Activated CD8-positive, alpha-beta T cell treated with anti-CD3 and anti-CD28 coated beads for 36 hours (primary cell): ENCODE measurements at regions of chr7 and their contacts with region 1.

Region 1: DNA sequence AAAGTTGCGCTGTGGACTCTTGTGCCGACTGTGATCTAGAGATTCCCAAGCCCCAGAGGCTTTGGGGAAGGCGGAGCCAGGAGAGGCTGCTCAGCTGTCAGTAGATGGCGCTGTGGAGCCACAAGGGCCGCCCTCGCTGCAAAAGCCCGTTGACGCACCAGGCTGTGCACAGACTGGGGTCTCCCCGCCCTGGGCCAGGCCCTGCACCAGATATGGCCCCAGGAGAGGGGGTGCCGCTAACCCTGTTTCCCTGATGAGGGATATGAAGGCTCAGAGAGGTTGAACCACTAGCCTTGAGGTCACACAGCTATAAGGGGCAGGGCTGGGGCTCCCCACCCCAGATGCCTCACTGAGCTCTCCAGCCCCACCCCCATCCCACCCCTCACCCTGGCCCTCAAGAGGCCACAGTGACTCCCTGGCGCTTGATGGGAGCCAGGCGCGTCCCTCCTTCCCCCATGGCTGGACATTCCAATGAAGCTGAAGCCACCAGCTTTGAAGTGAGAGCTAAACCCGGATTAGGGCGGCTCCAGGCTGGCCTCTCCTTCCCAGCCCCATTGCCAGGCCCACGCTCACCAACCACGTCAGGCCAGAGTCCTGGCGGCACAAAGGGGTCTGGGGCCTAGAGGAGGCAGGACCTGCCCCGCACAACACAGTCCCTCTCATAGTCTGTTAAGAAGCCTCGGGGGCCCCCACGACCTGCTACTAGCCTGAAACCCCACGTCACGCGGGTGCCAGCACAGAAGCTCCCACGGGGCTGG is 26.4 kb downstream of the MYL10 start:
- DNase-seq: peak; percentile 79
- ATAC-seq: peak; percentile 96
- H3K4me3 Mint-ChIP-seq: no peak overlapping the region
- H3K27ac Mint-ChIP-seq: no peak overlapping the region
- H3K4me1 Mint-ChIP-seq: no peaks in the 10 kb centered on the region
- H3K27me3 Mint-ChIP-seq: no peaks in the 10 kb centered on the region
- CTCF ChIP-seq: peak; percentile 87

Region 2: GRCh38 chr7:101531726-101532357 is 70.8 kb before region 1 on chr7:
- CTCF ChIA-PET with region 1: no interaction called
- POLR2A ChIA-PET with region 1: no interaction called
- intact Hi-C with region 1: no loop called
- DNase-seq: no peak
- ATAC-seq: no peak
- H3K4me3 Mint-ChIP-seq: no peak overlapping the region
- H3K27ac Mint-ChIP-seq: no peak overlapping the region
- H3K4me1 Mint-ChIP-seq: no peaks in the 10 kb centered on the region
- H3K27me3 Mint-ChIP-seq: peaks cover 3% of the 10 kb centered on the region
- CTCF ChIP-seq: no peak

Region 3: GRCh38 chr7:101615446-101615845 is 12.8 kb after region 1 on chr7:
- CTCF ChIA-PET with region 1: interaction called, 11 read pairs
- POLR2A ChIA-PET with region 1: no interaction called
- intact Hi-C with region 1: no loop called
- DNase-seq: no peak
- ATAC-seq: no peak
- H3K4me3 Mint-ChIP-seq: no peak overlapping the region
- H3K27ac Mint-ChIP-seq: no peak overlapping the region
- H3K4me1 Mint-ChIP-seq: no peaks in the 10 kb centered on the region
- H3K27me3 Mint-ChIP-seq: peaks cover 4% of the 10 kb centered on the region
- CTCF ChIP-seq: no peak

Region 4: GRCh38 chr7:101815835-101816493 is 213.3 kb after region 1 on chr7:
- CTCF ChIA-PET with region 1: no interaction called
- POLR2A ChIA-PET with region 1: no interaction called
- intact Hi-C with region 1: no loop called
- DNase-seq: peak; percentile 76
- ATAC-seq: peak; percentile 78
- H3K4me3 Mint-ChIP-seq: peak overlapping the region; percentile 75
- H3K27ac Mint-ChIP-seq: peak overlapping the region; percentile 83
- H3K4me1 Mint-ChIP-seq: peaks cover 24% of the 10 kb centered on the region
- H3K27me3 Mint-ChIP-seq: no peaks in the 10 kb centered on the region
- CTCF ChIP-seq: no peak

Region 5: GRCh38 chr7:102236592-102237287 is 634.1 kb after region 1 on chr7:
- CTCF ChIA-PET with region 1: interaction called, 3 read pairs
- POLR2A ChIA-PET with region 1: no interaction called
- intact Hi-C with region 1: loop called (anchors 10 kb)
- DNase-seq: peak; percentile 65
- ATAC-seq: peak; percentile 73
- H3K4me3 Mint-ChIP-seq: no peak overlapping the region
- H3K27ac Mint-ChIP-seq: no peak overlapping the region
- H3K4me1 Mint-ChIP-seq: no peaks in the 10 kb centered on the region
- H3K27me3 Mint-ChIP-seq: no peaks in the 10 kb centered on the region
- CTCF ChIP-seq: peak; percentile 82